Heart right ventricle (tissue), 16 donors: ENCODE measurements at regions of chr3 and their contacts with region 1.

Region 1: GRCh38 chr3:150314248-150315004 is 93.7 kb upstream of the TSC22D2 start:
- DNase-seq: no peak
- ATAC-seq: peak in 2 of 8 donors; percentile 52 to 70
- H3K4me3 ChIP-seq: no peak overlapping the region
- H3K27ac ChIP-seq: no peak overlapping the region
- H3K4me1 ChIP-seq: no peaks in the 10 kb centered on the region
- H3K27me3 ChIP-seq: peaks cover 0 to 2% (median 0%) of the 10 kb centered on the region in 7 donors
- CTCF ChIP-seq: no peak

Region 2: DNA sequence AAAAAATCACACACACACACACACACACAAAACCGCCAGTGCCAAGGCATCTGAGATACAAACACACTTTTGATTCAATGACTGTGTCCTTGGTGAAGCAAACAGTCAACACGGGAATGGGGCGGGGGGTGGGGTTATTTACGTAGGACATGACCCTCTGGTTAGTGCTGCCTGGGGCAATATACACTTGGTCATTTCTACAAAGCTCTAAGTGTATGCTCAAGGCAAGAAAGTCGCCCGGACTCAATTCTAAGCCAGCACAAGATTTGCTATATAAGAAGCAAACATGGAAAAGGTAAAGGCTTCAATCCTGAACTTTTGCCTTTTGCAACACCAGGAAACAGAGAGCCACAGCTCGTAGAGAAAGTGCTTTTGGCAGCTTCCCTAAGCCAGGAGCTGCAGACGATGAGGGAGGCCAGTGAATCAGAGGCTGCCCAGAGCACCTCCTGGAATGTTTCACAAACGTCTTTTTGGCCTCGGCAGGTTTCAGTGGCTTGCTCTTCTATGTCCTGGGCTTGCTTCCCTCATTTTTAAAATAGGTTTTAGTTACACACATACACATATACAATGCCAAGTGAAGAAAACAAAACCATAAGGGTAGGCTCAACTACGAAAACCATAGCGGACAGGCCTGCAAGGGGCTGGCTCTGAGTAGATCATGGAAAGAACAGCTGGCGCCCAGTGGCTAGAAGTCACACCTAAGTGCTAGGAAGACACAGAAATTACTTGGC is 766.3 kb before region 1 on chr3:
- intact Hi-C with region 1: no loop called
- DNase-seq: no peak
- ATAC-seq: peak; percentile 50 to 93 (median 69)
- H3K4me3 ChIP-seq: peak overlapping the region in 1 of 10 donors; percentile 14
- H3K27ac ChIP-seq: peak overlapping the region in 9 of 10 donors; percentile 53 to 83 (median 68)
- H3K4me1 ChIP-seq: peaks cover 0 to 53% (median 24%) of the 10 kb centered on the region in 9 donors
- H3K27me3 ChIP-seq: no peaks in the 10 kb centered on the region
- CTCF ChIP-seq: no peak

Region 3: GRCh38 chr3:150035301-150035779 is 279.1 kb before region 1 on chr3:
- intact Hi-C with region 1: loop called in 1 of 10 experiments (anchors 5 kb)
- DNase-seq: no peak
- ATAC-seq: peak in 4 of 8 donors; percentile 61 to 76 (median 66)
- H3K4me3 ChIP-seq: no peak overlapping the region
- H3K27ac ChIP-seq: no peak overlapping the region
- H3K4me1 ChIP-seq: peaks cover 0 to 5% (median 0%) of the 10 kb centered on the region in 9 donors
- H3K27me3 ChIP-seq: no peaks in the 10 kb centered on the region
- CTCF ChIP-seq: no peak